Colonic mucosa (tissue), 4 donors: ENCODE measurements at regions of chrX and their contacts with region 1.

Region 1: DNA sequence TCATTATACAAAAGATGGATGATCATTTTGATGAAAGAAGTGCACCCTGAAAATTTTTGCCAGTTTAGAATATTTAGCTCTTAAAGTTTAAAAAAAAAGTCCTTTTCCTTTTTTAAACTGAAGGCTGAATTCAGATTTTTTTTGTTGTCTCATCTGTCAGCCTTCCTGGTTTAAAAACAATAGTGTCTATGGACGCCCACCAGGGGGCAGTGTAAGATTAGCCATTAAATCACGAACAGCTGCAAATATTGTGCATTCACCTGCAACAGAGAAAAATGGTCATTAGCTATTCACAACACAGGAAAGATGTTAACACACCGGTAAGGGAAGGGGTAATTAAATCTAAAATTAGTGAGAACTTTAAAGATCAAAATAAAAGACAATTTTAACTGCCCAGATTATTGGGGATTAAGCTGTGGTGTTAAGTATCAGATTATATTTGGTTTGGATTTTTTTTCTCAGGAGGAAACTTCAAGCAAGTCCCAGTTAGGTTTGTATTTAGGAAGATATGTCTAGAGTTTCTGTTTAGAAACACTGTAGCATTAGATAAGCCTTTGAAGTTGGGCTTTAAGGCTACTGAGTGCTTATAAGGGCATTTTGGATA is 4.4 kb upstream of the CXorf38 start:
- DNase-seq: peak; percentile 78
- H3K4me3 ChIP-seq: no peak overlapping the region
- H3K27ac ChIP-seq: no peak overlapping the region
- H3K4me1 ChIP-seq: no peaks in the 10 kb centered on the region
- H3K27me3 ChIP-seq: no peaks in the 10 kb centered on the region
- CTCF ChIP-seq: peak; percentile 87

Region 2: GRCh38 chrX:40792433-40792832 is 140.7 kb after region 1 on chrX:
- intact Hi-C with region 1: loop called (anchors 5 kb)
- DNase-seq: no peak
- H3K4me3 ChIP-seq: no peak overlapping the region
- H3K27ac ChIP-seq: no peak overlapping the region
- H3K4me1 ChIP-seq: no peaks in the 10 kb centered on the region
- H3K27me3 ChIP-seq: no peaks in the 10 kb centered on the region
- CTCF ChIP-seq: no peak

Region 3: DNA sequence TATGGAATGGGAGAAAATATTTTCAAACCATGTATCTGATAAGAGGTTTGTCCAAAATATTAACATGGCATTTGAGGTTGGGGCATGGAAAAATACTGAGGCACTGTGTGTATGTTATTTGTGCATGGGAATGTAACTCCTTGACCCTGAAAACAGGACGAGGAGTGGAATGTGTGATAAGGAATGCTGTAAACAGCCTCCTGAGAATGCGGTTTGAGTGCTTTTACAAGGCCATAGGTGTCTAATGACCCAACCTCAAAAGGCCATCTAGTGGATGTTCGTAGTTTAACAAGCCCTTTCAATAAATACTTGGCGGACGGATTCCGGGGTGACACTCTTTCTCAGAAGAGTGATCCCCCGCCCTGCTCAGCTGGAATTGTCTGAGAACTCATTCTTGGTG is 270.6 kb after region 1 on chrX:
- intact Hi-C with region 1: loop called (anchors 10 kb)
- DNase-seq: no peak
- H3K4me3 ChIP-seq: no peak overlapping the region
- H3K27ac ChIP-seq: no peak overlapping the region
- H3K4me1 ChIP-seq: no peaks in the 10 kb centered on the region
- H3K27me3 ChIP-seq: peaks cover 7% of the 10 kb centered on the region
- CTCF ChIP-seq: no peak

Region 4: DNA sequence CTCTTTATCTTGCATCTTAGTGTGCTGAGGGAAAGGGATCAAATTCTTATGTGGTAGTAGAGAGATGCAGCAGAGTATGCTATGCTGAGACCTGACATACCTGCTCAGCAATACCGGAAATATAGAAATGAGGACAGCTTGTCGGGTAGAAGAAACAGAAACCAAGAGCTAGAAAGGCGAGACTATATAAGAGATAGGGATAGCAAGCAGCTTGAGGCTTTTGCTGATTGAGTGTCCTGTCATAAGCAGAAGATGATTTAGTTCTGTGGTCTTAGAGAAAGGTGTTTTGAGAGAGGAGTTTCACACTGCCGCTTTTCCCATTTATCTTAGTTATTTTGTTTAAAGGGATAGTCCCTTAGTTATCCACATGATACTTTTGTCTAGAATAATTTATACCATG is 465.2 kb after region 1 on chrX:
- intact Hi-C with region 1: loop called (anchors 10 kb)
- DNase-seq: no peak
- H3K4me3 ChIP-seq: no peak overlapping the region
- H3K27ac ChIP-seq: no peak overlapping the region
- H3K4me1 ChIP-seq: no peaks in the 10 kb centered on the region
- H3K27me3 ChIP-seq: no peaks in the 10 kb centered on the region
- CTCF ChIP-seq: no peak